AG04450 (cell line): ENCODE measurements at regions of chr6 and their contacts with region 1.

Region 1: DNA sequence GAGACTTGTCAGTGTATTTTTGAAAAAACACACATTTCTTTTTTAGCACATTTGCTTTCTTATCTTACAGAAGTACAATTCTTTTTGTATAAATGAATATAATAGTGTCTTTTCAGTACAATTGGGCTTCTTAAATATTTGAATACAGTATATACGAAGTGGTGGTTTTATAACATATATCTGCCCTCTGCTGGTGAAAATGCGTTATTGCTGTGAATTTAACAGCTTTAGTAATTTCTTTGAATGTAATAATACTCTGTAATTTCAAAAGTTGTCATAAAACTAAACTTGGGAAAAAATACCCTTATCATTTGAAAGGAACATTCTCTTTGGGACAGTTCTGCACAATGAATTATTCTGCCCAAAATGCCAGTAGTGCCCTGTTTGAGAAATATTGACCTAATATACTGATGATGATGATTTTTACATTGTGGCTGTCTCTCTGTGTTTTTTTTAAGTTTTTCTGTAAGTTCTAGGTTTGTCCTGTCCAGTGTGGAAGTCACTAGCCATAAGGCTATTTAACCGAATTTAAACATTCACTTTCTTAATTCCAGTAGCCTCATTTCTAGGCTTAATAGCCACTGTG is 19.0 kb downstream of the SMAP1 start:
- DNase-seq: no peak
- H3K4me3 ChIP-seq: no peak overlapping the region
- H3K27ac ChIP-seq: no peak overlapping the region
- H3K27me3 ChIP-seq: no peaks in the 10 kb centered on the region
- CTCF ChIP-seq: peak; percentile 64

Region 2: DNA sequence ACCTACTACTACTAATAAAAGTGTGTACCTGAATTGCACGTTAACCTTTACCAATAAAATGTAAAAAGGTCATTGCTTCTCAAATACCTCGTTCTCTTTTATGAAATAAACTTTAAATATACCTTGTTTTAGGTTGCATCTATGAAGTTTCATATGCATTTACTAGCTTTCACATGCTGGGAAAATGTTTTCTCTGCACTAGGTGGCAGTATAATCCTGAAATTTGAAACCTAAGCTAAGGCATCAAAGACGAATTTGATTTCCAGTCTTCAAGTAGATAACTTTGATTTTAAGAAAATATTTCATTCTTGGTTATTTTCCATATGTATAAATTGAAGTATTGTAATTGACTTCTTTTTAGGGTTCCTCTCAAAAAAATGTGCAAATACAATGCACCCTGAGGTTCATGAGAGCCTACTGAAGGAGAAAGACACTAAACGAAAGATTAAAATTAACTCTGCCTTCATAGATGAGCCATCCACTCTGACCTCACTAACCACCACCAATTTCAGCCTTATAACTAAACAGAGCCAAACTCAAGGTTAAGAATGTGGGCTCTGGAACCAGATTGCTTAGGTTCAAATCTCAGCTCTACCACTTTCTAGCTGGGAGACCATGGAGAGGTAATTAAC is 376.5 kb before region 1 on chr6:
- CTCF ChIA-PET with region 1: interaction called, 22 read pairs
- POLR2A ChIA-PET with region 1: no interaction called
- DNase-seq: no peak
- H3K4me3 ChIP-seq: no peak overlapping the region
- H3K27ac ChIP-seq: no peak overlapping the region
- H3K27me3 ChIP-seq: peaks cover 22% of the 10 kb centered on the region
- CTCF ChIP-seq: peak; percentile 64

Region 3: DNA sequence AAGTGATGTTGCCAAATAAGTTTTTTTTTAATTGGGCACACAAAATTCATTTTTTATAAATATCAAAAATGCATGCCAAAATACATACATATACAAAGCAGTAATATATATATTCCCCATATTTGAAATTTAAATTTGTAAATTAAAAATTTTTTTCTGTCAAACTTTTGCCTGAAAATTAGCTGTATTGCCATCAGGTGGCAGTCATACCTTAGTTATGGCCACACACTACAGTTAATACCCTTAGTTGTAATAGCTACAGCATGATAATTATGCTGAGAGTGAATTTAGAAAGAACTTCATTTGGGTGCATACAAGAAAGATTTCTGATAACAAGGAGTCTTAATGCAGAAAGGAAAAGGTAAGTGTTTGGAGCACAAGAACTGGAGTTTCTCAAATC is 166.1 kb before region 1 on chr6:
- CTCF ChIA-PET with region 1: interaction called, 22 read pairs
- POLR2A ChIA-PET with region 1: no interaction called
- DNase-seq: no peak
- H3K4me3 ChIP-seq: no peak overlapping the region
- H3K27ac ChIP-seq: no peak overlapping the region
- H3K27me3 ChIP-seq: no peaks in the 10 kb centered on the region
- CTCF ChIP-seq: peak; percentile 43

Region 4: DNA sequence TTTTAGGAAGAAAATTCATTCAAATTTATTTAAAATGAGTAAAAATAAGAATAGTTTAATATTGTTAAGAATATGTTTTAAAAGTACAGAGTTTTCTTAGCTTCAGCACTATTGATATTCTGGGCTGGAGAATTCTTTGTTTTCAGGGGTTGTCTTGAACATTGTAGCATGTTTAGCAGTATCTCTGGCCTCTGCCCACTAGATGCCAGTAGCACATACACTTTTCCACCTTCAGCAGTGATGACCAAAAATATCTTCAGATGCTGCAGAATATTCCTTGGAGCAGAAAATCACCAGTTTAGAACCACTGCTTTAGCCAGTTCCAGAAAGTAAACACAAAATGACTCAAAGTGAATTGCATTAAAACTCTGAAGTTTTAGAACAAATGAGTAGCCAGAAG is 139.3 kb before region 1 on chr6:
- CTCF ChIA-PET with region 1: interaction called, 24 read pairs
- POLR2A ChIA-PET with region 1: no interaction called
- DNase-seq: no peak
- H3K4me3 ChIP-seq: no peak overlapping the region
- H3K27ac ChIP-seq: no peak overlapping the region
- H3K27me3 ChIP-seq: no peaks in the 10 kb centered on the region
- CTCF ChIP-seq: peak; percentile 46

Region 5: GRCh38 chr6:70667711-70668498 is 18.7 kb before region 1 on chr6 and contains the start of gene SMAP1:
- CTCF ChIA-PET with region 1: interaction called, 29 read pairs
- POLR2A ChIA-PET with region 1: interaction called, 3 read pairs
- DNase-seq: peak; percentile 71
- H3K4me3 ChIP-seq: peak within 1 kb of the TSS; percentile 88
- H3K27ac ChIP-seq: peak within 1 kb of the TSS; percentile 58
- H3K27me3 ChIP-seq: no peaks in the 10 kb centered on the region
- CTCF ChIP-seq: no peak
- polyA plus RNA-seq, gene SMAP1: 23.6 and 25.0 TPM in 2 replicates

Region 6: DNA sequence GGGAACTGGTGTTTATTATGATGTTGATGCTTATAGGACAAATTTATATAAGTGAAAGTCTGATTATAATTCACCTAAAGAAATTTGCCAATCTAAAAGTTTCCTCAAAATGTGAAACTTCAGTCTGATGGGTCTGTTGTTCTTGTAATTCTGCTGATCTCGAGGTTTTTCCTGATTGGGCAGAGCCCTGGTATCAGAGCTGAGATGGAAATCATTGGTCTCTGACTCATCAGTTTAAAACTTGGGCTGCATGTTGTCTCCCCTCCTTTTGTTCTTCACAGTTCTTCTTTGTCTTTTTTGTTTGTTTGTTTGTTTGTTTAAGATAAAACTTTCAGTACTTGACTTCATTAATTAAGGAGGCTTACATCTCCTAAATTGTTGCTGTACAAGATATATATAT is 13.0 kb before region 1 on chr6:
- CTCF ChIA-PET with region 1: interaction called, 29 read pairs
- POLR2A ChIA-PET with region 1: no interaction called
- DNase-seq: no peak
- H3K4me3 ChIP-seq: no peak overlapping the region
- H3K27ac ChIP-seq: no peak overlapping the region
- H3K27me3 ChIP-seq: no peaks in the 10 kb centered on the region
- CTCF ChIP-seq: no peak

Region 7: DNA sequence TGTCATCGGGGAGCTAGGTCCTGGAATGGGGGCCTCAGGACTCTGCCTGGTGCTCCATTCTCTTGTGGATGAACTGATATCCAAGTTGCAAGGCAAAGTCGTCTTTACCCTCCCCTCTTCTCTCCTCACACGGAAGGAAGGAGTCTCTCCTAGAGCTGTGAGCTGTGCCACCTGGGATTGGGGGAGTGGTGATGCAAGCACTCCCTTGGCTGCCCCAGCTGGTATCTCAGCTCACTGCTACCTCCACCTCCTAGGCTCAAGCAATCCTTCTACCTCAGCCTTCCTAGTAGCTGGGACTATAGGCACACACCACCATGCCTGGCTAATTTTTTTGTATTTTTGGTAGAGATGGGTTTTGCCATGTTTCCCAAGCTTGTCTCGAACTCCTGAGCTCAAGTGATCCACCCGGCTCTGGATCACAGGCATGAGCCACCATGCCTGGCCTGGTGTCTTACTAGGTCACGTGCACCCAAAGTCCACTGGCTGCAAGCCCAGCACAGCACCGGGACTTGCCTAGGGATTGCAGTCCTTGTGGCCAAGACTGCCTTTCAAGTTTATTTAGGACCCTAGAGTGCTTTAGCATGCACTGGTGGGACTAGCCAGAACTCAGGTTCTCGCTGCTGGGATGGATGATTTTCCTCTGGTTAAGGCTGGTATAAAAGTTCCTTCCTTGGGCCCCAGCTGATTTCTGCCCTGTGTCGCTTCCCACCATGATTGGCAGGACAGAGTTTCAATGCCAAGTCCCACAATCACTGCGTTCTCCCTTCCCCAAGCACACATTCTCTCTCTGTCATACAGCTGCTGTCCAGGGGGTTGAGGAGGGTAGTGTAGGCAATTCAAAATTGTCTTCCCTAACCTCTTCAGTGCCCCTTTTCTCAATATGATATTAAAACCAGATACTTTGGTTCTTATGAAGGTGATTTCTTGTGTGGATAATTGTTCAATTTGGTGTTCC is 14.6 kb after region 1 on chr6:
- CTCF ChIA-PET with region 1: interaction called, 13 read pairs
- POLR2A ChIA-PET with region 1: no interaction called
- DNase-seq: no peak
- H3K4me3 ChIP-seq: no peak overlapping the region
- H3K27ac ChIP-seq: no peak overlapping the region
- H3K27me3 ChIP-seq: no peaks in the 10 kb centered on the region
- CTCF ChIP-seq: no peak

Region 8: DNA sequence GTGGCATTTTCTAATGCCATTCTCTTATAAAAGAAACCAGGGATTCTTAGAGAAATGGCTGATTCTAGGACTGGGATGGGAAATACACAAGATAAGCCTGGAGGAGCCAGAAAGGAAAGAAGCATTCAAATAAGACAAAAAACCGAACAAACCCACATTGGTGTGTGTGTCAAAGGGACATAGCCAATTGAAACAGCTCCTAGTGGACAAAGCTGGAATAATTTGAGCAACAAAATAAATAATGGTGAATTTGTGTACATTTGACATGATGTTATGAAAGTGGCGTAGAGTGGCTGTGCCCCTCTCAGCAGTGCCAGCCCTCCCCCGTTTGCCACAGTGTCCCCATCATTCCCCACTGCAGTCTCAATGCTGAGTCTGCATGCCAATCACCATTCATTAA is 214.7 kb after region 1 on chr6:
- CTCF ChIA-PET with region 1: no interaction called
- POLR2A ChIA-PET with region 1: no interaction called
- DNase-seq: no peak
- H3K4me3 ChIP-seq: no peak overlapping the region
- H3K27ac ChIP-seq: no peak overlapping the region
- H3K27me3 ChIP-seq: no peaks in the 10 kb centered on the region
- CTCF ChIP-seq: peak; percentile 36